Gastrocnemius medialis (tissue), 4 donors: ENCODE measurements at regions of chr6 and their contacts with region 1.

Region 1: GRCh38 chr6:27893059-27893835 is 18.9 kb downstream of the OR2B2 start:
- DNase-seq: peak in 1 of 2 donors; percentile 56
- ATAC-seq: peak; percentile 47 to 62
- H3K4me3 ChIP-seq: peak overlapping the region; percentile 66 to 77 (median 70)
- H3K27ac ChIP-seq: peak overlapping the region in 3 of 4 donors; percentile 36 to 52 (median 49)
- H3K4me1 ChIP-seq: peaks cover 15 to 32% of the 10 kb centered on the region in 2 donors
- H3K27me3 ChIP-seq: peaks cover 47 to 56% (median 48%) of the 10 kb centered on the region in 3 donors
- CTCF ChIP-seq: no peak
- POLR2A ChIP-seq: peak; percentile 45 to 65

Region 2: GRCh38 chr6:27157459-27158315 is 735.6 kb before region 1 on chr6:
- in situ Hi-C with region 1: loop called in 3 of 4 experiments (anchors 10 to 25 kb)
- intact Hi-C with region 1: no loop called
- DNase-seq: peak in 1 of 2 donors; percentile 30
- ATAC-seq: peak; percentile 30 to 60
- H3K4me3 ChIP-seq: peak overlapping the region; percentile 41 to 51 (median 44)
- H3K27ac ChIP-seq: no peak overlapping the region
- H3K4me1 ChIP-seq: peaks cover 0 to 8% of the 10 kb centered on the region in 2 donors
- H3K27me3 ChIP-seq: peaks cover 0 to 5% (median 0%) of the 10 kb centered on the region in 3 donors
- CTCF ChIP-seq: peak in 4 of 5 experiments; percentile 25 to 36 (median 32)
- POLR2A ChIP-seq: no peak

Region 3: DNA sequence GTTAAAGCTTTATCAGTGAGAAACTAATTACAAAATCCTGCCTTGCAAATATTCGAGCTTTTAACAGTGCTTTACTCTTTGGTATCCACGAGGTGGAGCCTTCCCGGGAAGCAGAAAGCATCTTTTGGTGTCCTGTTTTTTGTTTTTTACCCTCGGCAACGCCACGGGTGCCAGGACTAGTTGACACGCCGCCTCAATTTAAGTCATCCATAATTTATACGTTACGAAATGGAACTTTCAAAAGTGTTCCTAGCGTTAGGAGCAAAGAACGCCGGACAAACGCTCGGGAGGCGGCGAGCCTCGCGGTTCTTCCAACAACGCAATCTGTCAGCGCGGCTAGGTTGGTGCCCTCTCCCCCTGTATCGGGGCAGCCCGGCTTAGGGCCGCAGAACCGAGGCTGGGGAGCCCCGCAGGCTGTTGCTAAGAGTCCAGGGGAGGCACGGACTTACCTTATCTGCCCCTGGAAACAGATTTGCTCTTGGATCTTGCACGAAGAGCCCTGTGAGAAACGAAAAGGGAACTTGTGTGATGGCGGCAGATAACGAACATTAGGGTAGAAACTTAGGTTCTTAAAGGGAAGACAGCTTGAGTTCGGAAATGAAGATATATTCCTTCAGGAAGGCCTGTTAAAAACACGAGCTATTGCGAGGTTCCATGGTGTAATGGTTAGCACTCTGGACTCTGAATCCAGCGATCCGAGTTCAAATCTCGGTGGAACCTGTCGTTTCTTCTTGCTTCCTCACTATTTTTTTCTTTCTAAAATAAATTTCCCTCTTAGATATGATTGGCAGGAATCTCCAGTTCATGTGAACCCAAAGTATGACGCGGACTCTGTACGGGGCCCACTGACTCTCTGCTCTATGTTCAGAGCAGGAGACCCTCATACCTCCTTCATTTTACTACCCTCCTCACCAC is 374.1 kb before region 1 on chr6:
- in situ Hi-C with region 1: loop called in 1 of 4 experiments (anchors 10 kb)
- intact Hi-C with region 1: loop called (anchors 2 kb)
- DNase-seq: peak; percentile 18 to 29
- ATAC-seq: peak; percentile 88 to 89
- H3K4me3 ChIP-seq: peak overlapping the region; percentile 65 to 88 (median 76)
- H3K27ac ChIP-seq: peak overlapping the region; percentile 77 to 82 (median 79)
- H3K4me1 ChIP-seq: peaks cover 6 to 7% of the 10 kb centered on the region in 2 donors
- H3K27me3 ChIP-seq: peaks cover 4 to 11% (median 8%) of the 10 kb centered on the region in 3 donors
- CTCF ChIP-seq: peak in 4 of 5 experiments; percentile 32 to 65 (median 59)
- POLR2A ChIP-seq: no peak

Region 4: DNA sequence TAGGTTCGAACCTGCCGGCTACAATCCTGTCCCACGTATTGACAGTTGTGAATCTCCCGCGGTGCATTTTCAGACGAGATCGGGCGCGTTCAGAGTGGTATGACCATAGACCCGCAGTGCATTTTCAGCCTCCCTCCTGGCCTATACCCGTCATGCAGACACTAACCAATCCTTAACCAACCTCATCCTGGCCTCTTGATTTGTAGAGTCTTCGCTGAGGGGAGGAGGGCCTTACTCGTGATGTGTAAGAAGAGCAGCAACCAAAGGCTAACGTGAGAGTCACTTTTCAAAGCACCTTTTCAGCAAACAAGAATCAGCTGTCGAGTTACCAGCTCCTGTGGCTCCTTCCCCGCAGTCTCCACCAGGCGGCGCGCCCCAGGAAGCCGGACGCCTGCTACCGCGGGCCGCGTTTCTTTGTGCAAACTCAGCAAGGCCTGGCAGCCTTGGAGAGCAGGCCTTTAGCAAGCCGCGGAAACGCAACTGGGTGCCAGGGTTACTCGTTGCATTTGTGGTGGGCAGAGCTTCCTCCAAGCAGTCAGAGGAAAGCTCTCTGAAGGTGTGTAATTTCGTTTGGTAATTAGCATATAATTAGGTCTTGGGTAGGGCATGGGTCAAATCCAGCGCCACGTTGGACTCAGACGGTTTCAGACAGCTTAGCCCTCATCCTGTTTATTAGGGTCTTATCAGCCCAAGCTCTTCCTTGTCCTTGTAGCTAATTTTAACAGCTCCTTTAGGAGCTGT is 120.8 kb before region 1 on chr6:
- in situ Hi-C with region 1: loop called in 3 of 4 experiments (anchors 5 to 25 kb)
- intact Hi-C with region 1: loop called (anchors 1 kb)
- DNase-seq: peak; percentile 51 to 57
- ATAC-seq: peak; percentile 66 to 89
- H3K4me3 ChIP-seq: no peak overlapping the region
- H3K27ac ChIP-seq: no peak overlapping the region
- H3K4me1 ChIP-seq: no peaks in the 10 kb centered on the region
- H3K27me3 ChIP-seq: peaks cover 0 to 20% (median 14%) of the 10 kb centered on the region in 3 donors
- CTCF ChIP-seq: peak; percentile 57 to 88 (median 82)
- POLR2A ChIP-seq: no peak

Region 5: GRCh38 chr6:27864906-27865849 is 28.1 kb before region 1 on chr6:
- in situ Hi-C with region 1: no loop called
- intact Hi-C with region 1: loop called (anchors 2 kb)
- DNase-seq: peak in 1 of 2 donors; percentile 29
- ATAC-seq: peak; percentile 94 to 95
- H3K4me3 ChIP-seq: peak overlapping the region; percentile 60 to 66 (median 64)
- H3K27ac ChIP-seq: peak overlapping the region in 1 of 4 donors; percentile 34
- H3K4me1 ChIP-seq: peaks cover 25 to 31% of the 10 kb centered on the region in 2 donors
- H3K27me3 ChIP-seq: peaks cover 51 to 71% (median 62%) of the 10 kb centered on the region in 3 donors
- CTCF ChIP-seq: no peak
- POLR2A ChIP-seq: peak; percentile 28 to 49

Region 6: GRCh38 chr6:29153083-29153482 is 1259.8 kb after region 1 on chr6:
- in situ Hi-C with region 1: no loop called
- intact Hi-C with region 1: no loop called
- DNase-seq: no peak
- ATAC-seq: no peak
- H3K4me3 ChIP-seq: no peak overlapping the region
- H3K27ac ChIP-seq: no peak overlapping the region
- H3K4me1 ChIP-seq: no peaks in the 10 kb centered on the region
- H3K27me3 ChIP-seq: no peaks in the 10 kb centered on the region
- CTCF ChIP-seq: no peak
- POLR2A ChIP-seq: no peak